MCF 10A (cell line): ENCODE measurements at regions of chr7 and their contacts with region 1.

Region 1: GRCh38 chr7:34091323-34091917 is 186.1 kb downstream of the BMPER start:
- DNase-seq: peak; percentile 68
- H3K4me3 Mint-ChIP-seq: no peak overlapping the region
- H3K27ac Mint-ChIP-seq: no peak overlapping the region
- H3K4me1 Mint-ChIP-seq: peaks cover 11% of the 10 kb centered on the region
- H3K27me3 Mint-ChIP-seq: no peaks in the 10 kb centered on the region
- CTCF ChIP-seq: peak; percentile 61

Region 2: GRCh38 chr7:33243319-33243881 is 848.0 kb before region 1 on chr7:
- CTCF ChIA-PET with region 1: interaction called, 14 read pairs
- POLR2A ChIA-PET with region 1: no interaction called
- intact Hi-C with region 1: loop called (anchors 5 kb)
- DNase-seq: peak; percentile 57
- H3K4me3 Mint-ChIP-seq: no peak overlapping the region
- H3K27ac Mint-ChIP-seq: no peak overlapping the region
- H3K4me1 Mint-ChIP-seq: no peaks in the 10 kb centered on the region
- H3K27me3 Mint-ChIP-seq: no peaks in the 10 kb centered on the region
- CTCF ChIP-seq: peak; percentile 58

Region 3: GRCh38 chr7:33982425-33982786 is 109.0 kb before region 1 on chr7:
- CTCF ChIA-PET with region 1: interaction called, 11 read pairs
- POLR2A ChIA-PET with region 1: no interaction called
- intact Hi-C with region 1: no loop called
- DNase-seq: peak; percentile 54
- H3K4me3 Mint-ChIP-seq: no peak overlapping the region
- H3K27ac Mint-ChIP-seq: no peak overlapping the region
- H3K4me1 Mint-ChIP-seq: peaks cover 26% of the 10 kb centered on the region
- H3K27me3 Mint-ChIP-seq: no peaks in the 10 kb centered on the region
- CTCF ChIP-seq: peak; percentile 12

Region 4: DNA sequence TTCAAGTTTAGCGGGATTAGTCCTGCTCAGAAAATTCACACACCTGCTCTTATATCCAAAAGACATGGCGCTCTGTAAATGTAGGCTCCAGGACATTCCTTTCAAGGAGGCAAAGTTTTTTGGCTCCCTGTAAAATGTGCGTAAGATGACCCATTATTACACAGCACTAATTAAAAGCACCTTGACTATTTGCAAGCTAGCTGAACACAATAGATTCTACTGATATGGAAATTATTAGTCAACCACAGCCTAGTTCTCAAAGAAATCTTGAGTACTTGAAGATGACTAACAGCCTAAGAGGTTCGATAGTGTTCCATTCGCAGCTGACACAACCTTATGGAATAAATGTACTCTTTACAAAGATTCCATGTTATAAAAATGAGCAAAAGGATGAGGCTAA is 10.9 kb before region 1 on chr7:
- CTCF ChIA-PET with region 1: interaction called, 13 read pairs
- POLR2A ChIA-PET with region 1: no interaction called
- intact Hi-C with region 1: no loop called
- DNase-seq: no peak
- H3K4me3 Mint-ChIP-seq: no peak overlapping the region
- H3K27ac Mint-ChIP-seq: no peak overlapping the region
- H3K4me1 Mint-ChIP-seq: no peaks in the 10 kb centered on the region
- H3K27me3 Mint-ChIP-seq: no peaks in the 10 kb centered on the region
- CTCF ChIP-seq: no peak

Region 5: DNA sequence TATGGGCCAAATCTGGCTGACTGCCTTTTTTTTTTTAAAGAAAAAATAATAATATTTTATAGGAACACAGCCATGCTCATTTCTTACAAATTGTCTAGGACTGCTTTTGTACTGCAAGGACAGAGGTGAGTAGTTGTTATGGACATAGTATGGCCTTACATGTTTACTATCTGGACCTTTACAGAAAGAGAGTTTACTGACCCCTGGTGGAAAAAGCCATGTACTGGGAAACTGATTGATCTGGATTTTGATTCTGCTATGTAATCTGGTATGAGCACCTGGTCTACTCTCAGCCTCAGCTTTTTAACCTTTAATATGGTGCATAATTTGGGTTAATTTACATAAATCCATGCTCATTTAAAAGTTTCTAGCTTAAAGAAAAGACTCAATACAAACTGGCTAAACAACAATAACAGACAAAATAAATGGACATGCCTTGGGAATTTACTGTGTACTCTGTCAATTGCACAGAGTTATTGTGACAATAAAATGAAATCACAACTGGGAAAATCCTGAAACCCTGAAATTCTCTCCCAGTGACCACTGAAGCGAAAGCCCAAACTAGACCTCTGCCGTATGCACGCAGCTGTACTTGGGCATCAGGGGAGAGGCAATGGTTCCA is 74.6 kb after region 1 on chr7:
- CTCF ChIA-PET with region 1: interaction called, 34 read pairs
- POLR2A ChIA-PET with region 1: no interaction called
- intact Hi-C with region 1: loop called (anchors 1 kb)
- DNase-seq: peak; percentile 62
- H3K4me3 Mint-ChIP-seq: no peak overlapping the region
- H3K27ac Mint-ChIP-seq: no peak overlapping the region
- H3K4me1 Mint-ChIP-seq: no peaks in the 10 kb centered on the region
- H3K27me3 Mint-ChIP-seq: no peaks in the 10 kb centered on the region
- CTCF ChIP-seq: peak; percentile 56